Activated CD4-positive, alpha-beta T cell treated with anti-CD3 and anti-CD28 coated beads, Interleukin-2, amount 10 ng/mL, durations not matched to agents 24 days and 14 days (primary cell): ENCODE measurements at regions of chr12 and their contacts with region 1.

Region 1: DNA sequence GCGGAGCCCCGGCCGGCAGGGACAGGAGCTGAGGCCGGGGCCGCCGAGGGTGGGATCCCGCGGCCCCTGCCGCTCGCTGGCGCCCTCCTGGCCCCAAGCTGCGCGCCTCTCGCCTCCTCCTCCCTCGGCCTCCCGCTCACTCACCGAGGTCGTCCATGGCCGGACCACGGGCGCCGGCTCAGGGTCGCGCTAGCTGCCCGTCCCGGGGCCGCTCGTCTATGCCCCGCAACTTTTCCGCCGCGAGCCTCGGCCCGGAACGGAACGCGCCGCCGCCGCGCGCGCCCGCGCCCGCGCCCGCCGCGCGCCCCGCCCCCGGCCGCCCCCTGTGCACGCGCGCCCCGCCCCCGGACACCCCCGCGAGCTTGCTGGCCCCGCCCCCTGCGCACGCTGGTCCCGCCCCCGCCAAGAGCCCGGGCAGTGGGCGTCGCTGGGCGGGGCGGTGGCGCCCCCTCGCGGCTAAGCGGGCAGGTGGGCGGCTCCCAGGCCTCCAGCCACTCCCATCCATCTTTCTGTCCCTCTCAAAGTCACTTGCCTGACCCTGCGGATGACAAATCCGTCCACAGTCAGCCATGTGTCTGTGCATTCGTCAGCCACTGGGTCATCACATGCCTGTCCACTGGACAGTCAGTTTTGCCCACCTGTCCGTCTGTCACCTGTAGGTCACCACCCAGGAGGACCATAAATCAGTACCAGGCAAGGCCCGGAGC is at the start of gene PXN:
- DNase-seq: peak; percentile 97
- H3K4me3 Mint-ChIP-seq: peak within 1 kb of the TSS; percentile 88
- H3K27ac Mint-ChIP-seq: peak within 1 kb of the TSS; percentile 93
- H3K4me1 Mint-ChIP-seq: peaks cover 45% of the 10 kb centered on the region
- H3K27me3 Mint-ChIP-seq: peaks cover 1% of the 10 kb centered on the region
- total RNA-seq, gene PXN: 48.4 and 51.2 TPM in 2 replicates

Region 2: GRCh38 chr12:120116792-120117651 is 148.6 kb before region 1 on chr12:
- intact Hi-C with region 1: loop called (anchors 10 kb)
- DNase-seq: peak; percentile 100
- H3K4me3 Mint-ChIP-seq: peak overlapping the region; percentile 90
- H3K27ac Mint-ChIP-seq: peak overlapping the region; percentile 92
- H3K4me1 Mint-ChIP-seq: peaks cover 72% of the 10 kb centered on the region
- H3K27me3 Mint-ChIP-seq: no peaks in the 10 kb centered on the region

Region 3: DNA sequence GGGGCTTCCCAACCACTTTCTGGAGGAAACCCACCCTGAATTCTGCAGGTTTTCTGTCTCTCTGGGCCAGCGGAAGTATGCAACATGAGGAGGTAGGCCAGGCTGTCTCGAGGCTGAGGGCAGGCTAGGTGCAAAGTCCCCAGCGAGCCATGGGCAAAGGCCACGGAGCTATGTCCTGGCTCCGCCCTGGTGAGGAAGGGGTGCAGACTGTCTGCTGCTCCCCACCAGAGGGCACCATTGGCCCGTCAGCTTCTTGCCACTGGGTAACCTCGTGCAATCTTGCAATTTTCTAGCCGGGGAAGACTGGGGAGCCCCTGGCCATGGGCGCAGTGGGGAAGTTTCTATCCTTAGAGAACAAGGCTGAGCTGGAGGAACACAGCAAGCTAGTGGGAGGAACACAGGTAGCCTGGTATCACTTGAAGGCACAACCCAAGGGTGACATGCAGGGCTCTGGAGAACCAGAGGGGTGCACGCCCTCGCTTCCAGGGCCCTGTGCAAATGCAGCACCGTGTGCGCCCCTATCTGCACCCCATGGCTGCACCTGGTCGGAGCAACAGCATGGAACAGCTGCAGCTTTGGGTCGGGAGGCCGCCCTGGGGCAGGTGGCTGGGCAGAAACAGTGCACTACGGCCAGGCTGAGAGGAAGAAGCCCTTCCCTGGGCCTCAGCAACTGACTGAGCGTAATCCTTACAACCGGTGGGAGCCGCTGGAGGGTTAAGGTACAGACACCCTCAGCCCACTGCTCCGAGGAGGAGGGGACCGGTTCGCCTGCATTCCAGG is 37.1 kb before region 1 on chr12:
- intact Hi-C with region 1: loop called (anchors 1 kb)
- DNase-seq: peak; percentile 96
- H3K4me3 Mint-ChIP-seq: peak overlapping the region; percentile 65
- H3K27ac Mint-ChIP-seq: peak overlapping the region; percentile 79
- H3K4me1 Mint-ChIP-seq: peaks cover 74% of the 10 kb centered on the region
- H3K27me3 Mint-ChIP-seq: no peaks in the 10 kb centered on the region

Region 4: DNA sequence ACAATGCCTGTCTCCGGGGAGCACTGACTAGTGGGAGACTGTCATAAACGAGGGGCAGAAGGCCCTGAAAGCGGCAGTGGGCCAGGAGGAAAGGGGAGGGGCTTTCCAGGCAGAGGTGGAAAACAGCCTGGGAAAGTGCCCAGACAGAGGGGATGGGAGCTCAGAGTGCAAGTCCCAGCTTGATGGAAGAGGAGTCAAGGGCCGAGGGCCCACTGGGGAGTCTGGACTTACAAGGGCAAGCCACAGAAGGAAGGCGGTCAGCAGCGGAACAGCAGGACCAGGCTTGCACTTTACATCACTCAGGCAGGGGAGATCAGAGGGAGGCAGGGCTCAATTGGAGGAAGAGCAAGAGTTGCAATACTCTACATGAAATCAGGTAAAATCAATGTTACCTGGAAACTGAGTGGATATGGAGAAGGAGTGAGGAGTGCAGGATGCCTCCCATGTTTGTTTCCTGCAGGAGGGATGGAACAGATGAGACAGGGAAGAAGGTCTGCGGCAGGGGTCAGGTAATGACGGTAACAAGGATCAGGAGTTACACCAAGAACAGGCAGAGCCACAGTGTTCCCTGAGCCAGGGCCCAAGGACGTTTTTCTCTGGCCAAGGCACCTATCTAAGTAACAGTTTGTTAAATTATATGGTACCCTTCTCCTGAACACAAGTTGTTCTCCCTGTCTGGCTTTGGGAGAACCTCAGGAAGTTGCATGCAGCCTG is 23.9 kb before region 1 on chr12:
- intact Hi-C with region 1: no loop called
- DNase-seq: no peak
- H3K4me3 Mint-ChIP-seq: no peak overlapping the region
- H3K27ac Mint-ChIP-seq: peak overlapping the region; percentile 8
- H3K4me1 Mint-ChIP-seq: peaks cover 37% of the 10 kb centered on the region
- H3K27me3 Mint-ChIP-seq: no peaks in the 10 kb centered on the region

Region 5: GRCh38 chr12:120252071-120252906 is 13.3 kb before region 1 on chr12:
- intact Hi-C with region 1: loop called (anchors 1 kb)
- DNase-seq: peak; percentile 92
- H3K4me3 Mint-ChIP-seq: peak overlapping the region; percentile 67
- H3K27ac Mint-ChIP-seq: peak overlapping the region; percentile 70
- H3K4me1 Mint-ChIP-seq: peaks cover 74% of the 10 kb centered on the region
- H3K27me3 Mint-ChIP-seq: no peaks in the 10 kb centered on the region

Region 6: DNA sequence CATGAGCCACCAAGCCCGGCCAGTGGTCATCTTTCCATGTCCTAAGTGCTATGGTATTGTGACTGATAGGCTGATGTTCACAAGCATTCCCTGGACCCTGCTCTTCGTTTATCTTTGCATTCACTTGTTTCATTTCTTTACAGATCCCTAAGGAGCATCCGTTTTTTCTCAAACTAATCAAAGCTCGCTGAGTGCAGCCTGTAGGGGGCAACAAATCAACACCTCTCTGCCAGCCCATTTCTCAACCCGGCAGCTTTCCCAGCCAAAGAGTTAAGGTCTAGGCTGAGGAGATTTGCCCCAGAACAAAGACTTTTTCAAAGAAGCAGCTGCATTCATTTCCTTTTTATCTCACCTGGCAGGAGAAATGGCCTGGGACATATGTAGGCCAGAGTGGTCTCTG is 48.6 kb after region 1 on chr12:
- intact Hi-C with region 1: no loop called
- DNase-seq: no peak
- H3K4me3 Mint-ChIP-seq: no peak overlapping the region
- H3K27ac Mint-ChIP-seq: no peak overlapping the region
- H3K4me1 Mint-ChIP-seq: peaks cover 12% of the 10 kb centered on the region
- H3K27me3 Mint-ChIP-seq: peaks cover 3% of the 10 kb centered on the region